ENCODE measurements at regions of chr7 and their contacts with region 1.

Region 1: DNA sequence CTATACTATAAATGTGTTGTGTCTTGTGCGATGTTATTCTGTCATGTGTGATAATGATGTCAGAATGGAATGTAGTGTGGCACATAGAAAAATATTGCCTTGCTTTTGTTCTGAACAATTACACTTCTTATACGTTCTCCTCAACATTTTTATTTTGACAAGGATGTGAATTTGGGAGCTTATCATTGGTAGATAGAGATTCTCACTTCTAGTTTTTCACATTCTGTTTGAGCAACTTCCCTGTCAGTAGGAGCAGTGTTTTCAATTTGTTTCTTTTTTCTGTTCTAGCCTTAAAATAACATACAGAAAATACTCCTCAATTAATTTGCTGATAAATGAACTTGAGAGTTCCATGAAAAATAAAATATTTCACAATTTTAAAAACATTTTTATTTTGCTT is 17.6 kb downstream of the SUN3 start:
- DNase-seq: no peak
- ATAC-seq: no peak
- H3K4me3 ChIP-seq: no peak overlapping the region
- H3K4me3 Mint-ChIP-seq: no peak overlapping the region
- H3K27ac ChIP-seq: no peak overlapping the region
- H3K27ac Mint-ChIP-seq: no peak overlapping the region
- H3K4me1 ChIP-seq: no peaks in the 10 kb centered on the region
- H3K4me1 Mint-ChIP-seq: no peaks in the 10 kb centered on the region
- H3K27me3 ChIP-seq: peaks cover 0 to 3% of the 10 kb centered on the region in 2 experiments
- H3K27me3 Mint-ChIP-seq: peaks cover 8% of the 10 kb centered on the region
- CTCF ChIP-seq: no peak

Region 2: DNA sequence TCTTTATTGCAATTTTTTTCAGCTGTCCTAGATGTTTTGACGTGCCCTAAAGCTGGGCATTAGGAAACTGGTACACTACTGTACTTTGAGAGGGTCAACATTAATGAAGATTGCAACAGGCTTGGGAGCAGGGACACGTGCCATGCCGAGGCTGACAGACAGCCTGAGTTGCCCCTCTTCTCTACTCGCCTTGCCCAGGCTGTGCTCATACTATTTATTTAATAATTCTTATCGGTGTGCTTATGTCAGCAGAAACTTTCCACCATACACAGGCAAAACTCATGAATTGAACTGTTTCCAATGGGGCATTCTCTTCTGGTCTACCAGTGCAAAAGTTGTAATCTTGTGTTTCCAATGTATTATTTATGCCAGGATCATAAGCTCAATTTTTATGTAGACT is 48.4 kb after region 1 on chr7:
- CTCF ChIA-PET with region 1: interaction called, 3 read pairs
- POLR2A ChIA-PET with region 1: no interaction called
- intact Hi-C with region 1: loop called in 1 of 2 experiments (anchors 5 kb)
- DNase-seq: no peak
- ATAC-seq: no peak
- H3K4me3 ChIP-seq: no peak overlapping the region
- H3K4me3 Mint-ChIP-seq: no peak overlapping the region
- H3K27ac ChIP-seq: no peak overlapping the region
- H3K27ac Mint-ChIP-seq: no peak overlapping the region
- H3K4me1 ChIP-seq: no peaks in the 10 kb centered on the region
- H3K4me1 Mint-ChIP-seq: no peaks in the 10 kb centered on the region
- H3K27me3 ChIP-seq: no peaks in the 10 kb centered on the region
- H3K27me3 Mint-ChIP-seq: peaks cover 7% of the 10 kb centered on the region
- CTCF ChIP-seq: no peak

Region 3: DNA sequence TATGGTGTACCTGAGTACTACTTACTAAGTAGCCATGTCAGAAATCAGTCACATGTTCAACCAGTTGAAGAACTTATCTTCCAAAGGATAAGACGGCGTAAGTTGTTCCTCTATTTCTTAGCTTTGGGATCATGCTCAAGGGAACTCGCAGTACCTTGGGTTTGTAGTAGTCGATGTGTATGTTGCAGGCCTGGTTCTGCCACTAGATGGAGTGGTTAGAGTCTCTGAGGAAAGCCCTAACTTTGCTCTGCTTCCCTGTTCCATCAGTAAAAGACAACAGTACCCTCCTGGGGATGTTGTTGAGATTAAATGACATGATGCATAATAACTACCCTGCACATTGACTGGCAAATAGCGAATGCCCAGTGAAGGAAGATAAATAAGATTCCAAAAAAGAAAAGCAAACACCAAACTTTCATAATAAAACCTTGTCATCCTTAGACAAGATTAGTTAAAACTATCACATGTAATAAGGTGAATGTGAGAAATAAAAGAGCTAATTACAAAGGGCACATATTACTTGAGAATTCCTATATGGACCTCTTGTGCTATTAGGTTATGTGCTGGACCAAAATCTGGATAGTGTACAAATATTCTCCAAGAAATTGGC is 325.8 kb after region 1 on chr7:
- CTCF ChIA-PET with region 1: no interaction called
- POLR2A ChIA-PET with region 1: no interaction called
- intact Hi-C with region 1: no loop called
- DNase-seq: no peak
- ATAC-seq: no peak
- H3K4me3 ChIP-seq: no peak overlapping the region
- H3K4me3 Mint-ChIP-seq: no peak overlapping the region
- H3K27ac ChIP-seq: no peak overlapping the region
- H3K27ac Mint-ChIP-seq: no peak overlapping the region
- H3K4me1 ChIP-seq: no peaks in the 10 kb centered on the region
- H3K4me1 Mint-ChIP-seq: no peaks in the 10 kb centered on the region
- H3K27me3 ChIP-seq: no peaks in the 10 kb centered on the region
- H3K27me3 Mint-ChIP-seq: no peaks in the 10 kb centered on the region
- CTCF ChIP-seq: no peak